ENCODE measurements at regions of chr10 and their contacts with region 1.

Region 1: GRCh38 chr10:74419958-74420375 is 268.9 kb downstream of the ADK start:
- DNase-seq: peak; percentile 39
- H3K4me3 Mint-ChIP-seq: no peak overlapping the region
- H3K27ac Mint-ChIP-seq: no peak overlapping the region
- H3K4me1 Mint-ChIP-seq: no peaks in the 10 kb centered on the region
- H3K27me3 Mint-ChIP-seq: no peaks in the 10 kb centered on the region
- CTCF ChIP-seq: peak; percentile 35

Region 2: DNA sequence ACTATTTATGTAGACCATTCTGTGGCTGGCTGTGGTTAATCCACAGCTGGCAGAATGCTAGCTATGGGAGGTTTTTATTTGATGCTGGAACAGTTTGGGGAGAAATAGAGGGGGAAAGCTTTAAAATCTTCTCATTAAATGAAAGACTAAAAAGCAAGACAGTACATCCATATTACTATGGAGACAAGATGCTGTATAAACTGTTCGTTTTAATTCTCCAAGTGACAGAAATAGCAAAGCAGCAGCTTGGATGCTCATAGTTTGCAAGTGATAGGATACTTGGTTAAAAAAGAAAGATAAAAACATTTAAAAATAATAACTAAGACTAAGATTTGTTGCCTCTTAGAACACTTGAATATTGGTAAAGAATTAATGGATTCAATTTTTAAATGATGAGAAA is 101.6 kb after region 1 on chr10:
- CTCF ChIA-PET with region 1: no interaction called
- POLR2A ChIA-PET with region 1: no interaction called
- intact Hi-C with region 1: no loop called
- DNase-seq: no peak
- H3K4me3 Mint-ChIP-seq: no peak overlapping the region
- H3K27ac Mint-ChIP-seq: no peak overlapping the region
- H3K4me1 Mint-ChIP-seq: peaks cover 12% of the 10 kb centered on the region
- H3K27me3 Mint-ChIP-seq: no peaks in the 10 kb centered on the region
- CTCF ChIP-seq: no peak

Region 3: DNA sequence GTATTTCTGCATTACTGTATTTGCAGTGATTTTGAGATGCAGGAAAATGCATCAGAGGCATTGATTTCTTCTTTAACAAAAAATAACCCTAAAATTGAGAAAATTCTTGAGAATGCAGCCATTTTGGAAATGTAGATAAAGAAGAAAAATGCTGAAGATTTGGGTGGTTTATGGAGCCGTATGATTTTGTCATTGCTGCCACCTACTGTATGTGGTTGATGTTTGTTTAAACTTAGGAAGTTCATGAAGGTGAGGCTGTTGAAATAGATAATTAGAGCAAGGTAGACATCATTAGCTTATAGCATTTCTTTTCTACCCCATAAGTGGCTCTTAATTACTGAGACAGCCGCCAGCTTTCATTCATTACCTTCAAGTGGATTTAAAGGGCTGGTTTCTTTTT is 599.4 kb after region 1 on chr10:
- CTCF ChIA-PET with region 1: no interaction called
- POLR2A ChIA-PET with region 1: no interaction called
- intact Hi-C with region 1: loop called (anchors 1 kb)
- DNase-seq: peak; percentile 38
- H3K4me3 Mint-ChIP-seq: no peak overlapping the region
- H3K27ac Mint-ChIP-seq: no peak overlapping the region
- H3K4me1 Mint-ChIP-seq: no peaks in the 10 kb centered on the region
- H3K27me3 Mint-ChIP-seq: no peaks in the 10 kb centered on the region
- CTCF ChIP-seq: peak; percentile 47

Measured in MCF 10A (cell line).